ENCODE measurements at regions of chr2 and their contacts with region 1.

Region 1: DNA sequence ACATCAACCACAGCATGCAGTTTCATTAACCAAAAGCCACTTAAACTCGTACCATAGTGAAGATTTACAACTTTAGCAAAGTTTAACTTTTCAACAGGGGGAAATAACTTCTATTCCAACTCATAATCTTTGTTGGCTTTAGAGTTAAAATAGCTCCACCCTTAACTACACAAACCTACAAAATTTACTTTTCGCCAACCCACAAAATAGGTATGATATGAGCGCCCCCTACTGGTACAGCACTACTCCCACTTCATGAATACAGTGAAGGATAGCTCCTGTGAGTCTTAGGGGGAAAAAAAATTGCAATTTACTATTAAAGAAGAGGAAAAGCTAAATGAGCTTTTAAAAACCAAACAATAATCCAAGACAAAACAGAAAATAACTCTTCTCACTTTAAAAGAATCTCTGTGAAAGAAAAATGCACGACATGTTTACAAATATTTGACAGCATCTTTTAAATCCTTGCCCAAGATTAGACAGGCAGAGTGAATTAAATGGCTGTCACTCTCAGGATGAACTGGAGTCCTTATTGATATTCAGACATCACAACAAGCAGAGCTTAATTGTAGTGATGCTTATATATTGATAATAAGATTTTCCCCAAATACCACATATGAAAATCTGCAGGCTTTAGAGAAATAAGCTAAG is 32.2 kb downstream of the TMEFF2 start:
- DNase-seq: peak in 3 of 4 donors; percentile 34 to 83 (median 71)
- ATAC-seq: peak; percentile 98
- H3K4me3 ChIP-seq: no peak overlapping the region
- H3K27ac ChIP-seq: no peak overlapping the region
- H3K4me1 ChIP-seq: peaks cover 0 to 9% of the 10 kb centered on the region in 2 donors
- H3K27me3 ChIP-seq: no peaks in the 10 kb centered on the region
- CTCF ChIP-seq: peak; percentile 79 to 91

Region 2: GRCh38 chr2:191555092-191555742 is 607.3 kb before region 1 on chr2:
- intact Hi-C with region 1: loop called in 1 of 2 experiments (anchors 10 kb)
- DNase-seq: peak in 3 of 4 donors; percentile 75 to 90 (median 78)
- ATAC-seq: peak; percentile 97
- H3K4me3 ChIP-seq: no peak overlapping the region
- H3K27ac ChIP-seq: no peak overlapping the region
- H3K4me1 ChIP-seq: peaks cover 0 to 9% of the 10 kb centered on the region in 2 donors
- H3K27me3 ChIP-seq: no peaks in the 10 kb centered on the region
- CTCF ChIP-seq: peak; percentile 65 to 77

Region 3: DNA sequence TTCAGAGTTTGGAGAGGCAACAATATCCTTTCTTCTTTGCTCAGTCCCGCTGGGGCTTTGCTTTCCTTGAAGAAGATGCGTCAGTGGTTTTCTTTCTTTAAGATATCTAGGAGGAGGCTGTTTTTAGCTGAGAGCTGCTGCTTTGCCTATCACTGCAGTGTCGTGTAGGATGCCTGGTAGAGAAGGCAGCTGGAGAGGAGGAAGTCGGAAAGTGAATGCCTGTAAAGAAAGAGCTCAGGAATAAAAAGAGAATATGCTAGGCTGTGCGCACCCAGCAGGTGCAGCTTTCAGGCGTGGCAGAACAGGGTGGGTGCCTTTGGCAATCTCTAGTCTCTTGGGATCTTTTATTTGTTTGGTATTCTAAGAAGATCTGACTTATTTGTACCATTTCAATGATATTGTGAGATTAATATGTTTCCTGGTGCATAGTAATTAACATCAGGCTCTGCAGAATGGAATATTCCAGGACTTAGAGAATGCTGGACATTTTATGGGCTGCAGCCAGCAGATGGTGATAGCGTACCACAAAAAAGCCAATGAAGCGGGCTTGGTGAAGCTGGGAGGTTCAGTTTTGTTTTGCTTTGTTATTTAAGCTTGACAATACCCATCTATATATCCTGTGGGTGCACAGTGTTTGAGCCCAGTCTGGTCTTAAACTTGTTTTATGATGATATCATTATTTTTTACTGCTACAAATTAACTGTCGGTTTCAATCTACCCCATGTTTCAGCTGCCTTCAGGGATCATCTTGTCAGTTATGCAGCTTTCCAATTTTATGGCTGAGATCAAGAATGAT is 350.5 kb before region 1 on chr2:
- intact Hi-C with region 1: loop called in 1 of 2 experiments (anchors 2 kb)
- DNase-seq: peak in 3 of 4 donors; percentile 53 to 76 (median 66)
- ATAC-seq: peak; percentile 93
- H3K4me3 ChIP-seq: no peak overlapping the region
- H3K27ac ChIP-seq: no peak overlapping the region
- H3K4me1 ChIP-seq: no peaks in the 10 kb centered on the region
- H3K27me3 ChIP-seq: no peaks in the 10 kb centered on the region
- CTCF ChIP-seq: peak; percentile 51 to 68

Region 4: DNA sequence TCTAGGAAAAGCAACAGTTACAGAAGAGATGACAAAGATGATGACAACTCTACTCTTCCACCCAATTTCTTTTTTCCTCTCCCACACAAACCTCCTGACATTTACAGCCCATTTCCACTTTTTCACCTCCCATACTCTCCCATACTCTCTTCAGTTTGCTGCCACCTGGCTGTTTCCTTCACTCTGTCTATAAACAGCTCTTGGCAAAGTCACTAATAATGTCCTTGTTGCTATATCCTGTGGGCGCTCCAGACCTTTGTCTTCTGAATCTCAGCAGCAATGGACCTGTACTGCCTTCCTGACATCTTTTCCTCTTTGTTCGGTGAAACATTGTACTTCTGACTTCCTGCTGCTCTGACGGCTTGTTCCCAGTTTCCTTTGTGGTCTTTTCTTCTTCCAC is 255.0 kb before region 1 on chr2:
- intact Hi-C with region 1: no loop called
- DNase-seq: peak in 1 of 4 donors; percentile 5
- ATAC-seq: no peak
- H3K4me3 ChIP-seq: no peak overlapping the region
- H3K27ac ChIP-seq: peak overlapping the region in 1 of 2 donors; percentile 7
- H3K4me1 ChIP-seq: no peaks in the 10 kb centered on the region
- H3K27me3 ChIP-seq: no peaks in the 10 kb centered on the region
- CTCF ChIP-seq: no peak

Region 5: GRCh38 chr2:191927319-191927867 is 235.1 kb before region 1 on chr2:
- intact Hi-C with region 1: no loop called
- DNase-seq: peak in 3 of 4 donors; percentile 16 to 76 (median 28)
- ATAC-seq: peak; percentile 79
- H3K4me3 ChIP-seq: no peak overlapping the region
- H3K27ac ChIP-seq: peak overlapping the region; percentile 30 to 74
- H3K4me1 ChIP-seq: peaks cover 3 to 10% of the 10 kb centered on the region in 2 donors
- H3K27me3 ChIP-seq: no peaks in the 10 kb centered on the region
- CTCF ChIP-seq: no peak

Region 6: DNA sequence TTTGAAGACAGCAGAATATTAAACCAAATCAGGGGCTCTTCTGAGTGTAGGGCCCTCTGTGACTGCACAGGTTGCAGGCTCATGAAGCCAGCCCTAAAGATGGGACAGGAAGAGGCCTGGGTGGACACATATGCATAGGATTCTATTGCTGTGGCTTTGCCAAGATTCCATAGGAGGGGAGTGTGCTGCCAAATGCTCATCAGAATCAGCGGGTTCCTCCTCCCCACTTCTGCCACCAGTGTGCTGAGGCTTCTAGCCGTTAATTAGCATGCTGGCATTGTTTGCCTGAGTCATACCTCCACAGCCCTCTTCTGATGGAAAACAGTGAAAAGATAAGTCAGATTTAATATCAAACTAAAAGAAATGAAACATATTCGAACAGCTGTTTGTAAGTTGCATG is 136.1 kb after region 1 on chr2:
- intact Hi-C with region 1: no loop called
- DNase-seq: no peak
- ATAC-seq: no peak
- H3K4me3 ChIP-seq: no peak overlapping the region
- H3K27ac ChIP-seq: no peak overlapping the region
- H3K4me1 ChIP-seq: no peaks in the 10 kb centered on the region
- H3K27me3 ChIP-seq: no peaks in the 10 kb centered on the region
- CTCF ChIP-seq: no peak

Region 7: DNA sequence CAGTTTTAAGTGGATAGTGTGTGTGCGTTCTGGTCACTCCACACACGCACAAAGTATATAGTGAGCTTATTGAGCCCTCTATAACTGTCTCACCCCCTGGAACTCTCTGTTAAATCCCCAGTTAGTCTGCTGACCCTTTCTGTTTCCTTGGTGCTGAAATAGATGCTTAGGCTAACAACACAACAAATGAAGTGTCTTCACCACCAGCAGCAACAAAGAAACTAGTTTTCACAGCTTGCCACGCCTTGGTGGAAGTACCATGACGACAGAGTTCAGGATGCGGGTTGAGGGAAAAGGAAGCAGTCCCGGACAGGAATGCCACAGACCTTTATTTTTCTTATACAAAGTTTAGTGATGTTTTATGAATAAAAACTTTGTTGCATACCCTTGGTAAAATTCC is 235.8 kb after region 1 on chr2:
- intact Hi-C with region 1: no loop called
- DNase-seq: no peak
- ATAC-seq: no peak
- H3K4me3 ChIP-seq: no peak overlapping the region
- H3K27ac ChIP-seq: no peak overlapping the region
- H3K4me1 ChIP-seq: no peaks in the 10 kb centered on the region
- H3K27me3 ChIP-seq: no peaks in the 10 kb centered on the region
- CTCF ChIP-seq: no peak

Measured in left lung (tissue), 14 donors.